ENCODE measurements at regions of chr16 and their contacts with region 1.

Region 1: DNA sequence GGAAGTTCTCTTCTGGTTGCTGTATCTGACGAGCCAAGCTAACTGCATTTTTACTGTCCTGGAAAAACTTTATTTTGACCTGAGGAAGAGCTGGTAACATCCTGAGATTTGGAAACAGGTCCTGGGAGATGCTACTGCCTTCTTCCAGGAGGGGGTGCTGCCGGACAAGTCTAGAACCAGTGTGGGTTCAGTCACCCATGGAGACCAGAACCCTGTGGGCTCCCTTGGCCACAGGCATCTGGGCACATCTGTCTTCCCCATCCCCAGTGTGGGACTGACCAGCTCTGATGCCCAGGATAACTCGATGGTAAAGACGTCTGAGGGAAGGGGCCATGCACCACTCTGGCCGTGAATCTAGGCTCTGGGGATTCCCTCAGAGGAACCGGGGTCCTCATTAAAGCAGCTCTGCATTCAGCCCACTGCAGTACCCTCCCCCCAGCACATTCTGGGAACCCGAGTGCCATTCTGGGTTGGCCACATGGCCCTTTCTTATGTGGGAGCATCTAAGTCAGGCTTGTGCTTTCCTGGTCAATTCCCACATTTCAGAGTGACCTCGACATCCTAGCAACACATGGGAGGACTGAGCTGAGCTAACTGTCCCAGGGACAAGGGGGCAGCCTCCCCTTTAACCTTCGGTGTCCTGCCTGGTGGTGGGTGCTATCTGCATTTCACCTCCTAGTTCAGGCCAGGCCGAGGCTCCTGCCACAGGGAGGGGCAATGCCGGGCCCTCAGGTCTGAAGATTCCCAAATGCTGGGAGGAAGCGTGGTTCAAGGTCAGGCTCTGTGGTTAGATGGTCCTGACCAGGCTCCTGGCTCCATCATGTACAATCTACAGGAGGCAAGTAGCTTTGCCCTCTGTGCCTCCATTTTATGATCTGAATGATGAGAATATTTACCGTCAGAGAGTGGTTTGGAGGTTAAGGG is 6.4 kb downstream of the C16orf86 start:
- DNase-seq: no peak
- ATAC-seq: peak; percentile 42
- H3K4me3 Mint-ChIP-seq: no peak overlapping the region
- H3K27ac Mint-ChIP-seq: peak overlapping the region; percentile 3
- H3K4me1 Mint-ChIP-seq: peaks cover 42% of the 10 kb centered on the region
- H3K27me3 Mint-ChIP-seq: no peaks in the 10 kb centered on the region
- CTCF ChIP-seq: no peak

Region 2: DNA sequence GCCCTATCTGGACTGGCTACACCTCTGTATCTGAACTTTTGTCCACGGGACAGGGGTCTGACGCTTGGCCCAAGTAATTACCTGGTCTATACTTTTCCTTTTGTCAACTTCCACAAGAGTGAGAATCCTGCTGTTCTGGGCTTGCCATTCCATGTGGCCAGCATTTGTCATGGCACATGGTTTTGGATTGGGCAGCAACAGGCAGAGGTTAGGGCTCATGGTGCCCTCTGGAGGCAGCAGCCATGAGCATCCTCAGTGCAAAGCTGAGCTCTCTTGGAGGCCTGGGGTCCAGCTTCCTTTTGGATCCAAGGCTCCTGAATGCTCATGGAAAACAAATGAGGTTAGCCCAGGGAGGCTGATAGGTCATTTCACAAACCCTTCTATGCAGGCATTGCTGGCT is 192.3 kb after region 1 on chr16:
- CTCF ChIA-PET with region 1: interaction called, 6 read pairs
- POLR2A ChIA-PET with region 1: interaction called, 3 read pairs
- intact Hi-C with region 1: loop called (anchors 1 kb)
- DNase-seq: no peak
- ATAC-seq: peak; percentile 57
- H3K4me3 Mint-ChIP-seq: no peak overlapping the region
- H3K27ac Mint-ChIP-seq: no peak overlapping the region
- H3K4me1 Mint-ChIP-seq: peaks cover 6% of the 10 kb centered on the region
- H3K27me3 Mint-ChIP-seq: no peaks in the 10 kb centered on the region
- CTCF ChIP-seq: no peak

Region 3: GRCh38 chr16:67928561-67929364 is 255.8 kb after region 1 on chr16:
- CTCF ChIA-PET with region 1: interaction called, 9 read pairs
- POLR2A ChIA-PET with region 1: no interaction called
- intact Hi-C with region 1: loop called (anchors 1 kb)
- DNase-seq: peak; percentile 64
- ATAC-seq: peak; percentile 90
- H3K4me3 Mint-ChIP-seq: no peak overlapping the region
- H3K27ac Mint-ChIP-seq: no peak overlapping the region
- H3K4me1 Mint-ChIP-seq: peaks cover 36% of the 10 kb centered on the region
- H3K27me3 Mint-ChIP-seq: no peaks in the 10 kb centered on the region
- CTCF ChIP-seq: peak; percentile 43